ENCODE measurements at regions of chr1 and their contacts with region 1.

Region 1: GRCh38 chr1:30801771-30802198 is 44.2 kb upstream of the LAPTM5 start:
- DNase-seq: peak; percentile 59
- H3K4me3 ChIP-seq: no peak overlapping the region
- H3K27ac ChIP-seq: no peak overlapping the region
- H3K4me1 ChIP-seq: peaks cover 2% of the 10 kb centered on the region
- H3K27me3 ChIP-seq: peaks cover 12 to 18% of the 10 kb centered on the region in 2 experiments
- CTCF ChIP-seq: peak; percentile 88 to 94
- POLR2A ChIP-seq: no peak

Region 2: DNA sequence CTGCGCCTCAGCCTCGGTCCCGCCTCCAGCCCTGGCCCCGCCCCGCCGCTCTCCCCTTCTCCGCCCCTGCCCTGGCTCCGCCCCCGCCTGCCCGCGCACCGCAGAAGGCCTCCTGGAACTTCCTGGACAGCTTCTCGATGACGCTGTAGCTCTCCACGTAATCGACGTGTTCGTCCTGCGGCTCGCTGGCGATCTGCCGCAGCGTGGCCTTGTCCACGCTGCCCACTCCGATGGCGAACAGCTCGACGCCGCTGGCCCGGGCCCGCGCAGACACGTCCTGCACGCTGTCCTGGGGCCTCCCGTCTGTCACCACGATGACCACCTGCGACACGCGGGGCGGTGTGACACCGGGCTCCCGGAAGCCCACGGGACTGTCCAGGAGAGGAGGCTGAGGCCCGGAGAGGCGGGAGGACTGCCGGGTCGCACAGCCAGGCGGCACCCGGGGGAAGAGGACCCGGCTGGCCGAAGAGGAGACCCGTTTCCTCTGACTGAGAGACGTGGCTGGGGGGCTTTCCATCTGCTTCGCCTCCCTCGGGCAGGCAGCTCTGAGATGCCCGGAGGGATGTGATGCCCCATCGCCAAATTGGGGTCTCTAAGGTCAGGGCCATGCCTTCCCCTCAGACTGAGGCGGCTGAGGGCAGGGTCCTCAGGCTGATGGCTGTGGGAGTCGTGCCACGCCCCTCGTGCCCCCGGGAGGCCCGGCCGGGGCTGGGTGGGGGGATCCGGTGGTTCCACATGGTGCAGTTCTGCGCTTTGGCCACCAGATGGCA is 83.0 kb before region 1 on chr1:
- CTCF ChIA-PET with region 1: interaction called, 15 read pairs
- POLR2A ChIA-PET with region 1: interaction called, 3 read pairs
- dilution Hi-C with region 1: no loop called
- intact Hi-C with region 1: no loop called
- DNase-seq: peak; percentile 96
- H3K4me3 ChIP-seq: peak overlapping the region; percentile 10 to 66 (median 27)
- H3K27ac ChIP-seq: peak overlapping the region; percentile 78
- H3K4me1 ChIP-seq: peaks cover 5% of the 10 kb centered on the region
- H3K27me3 ChIP-seq: no peaks in the 10 kb centered on the region
- CTCF ChIP-seq: peak; percentile 92 to 94
- POLR2A ChIP-seq: peak; percentile 72

Region 3: GRCh38 chr1:30816211-30817076 is 14.7 kb after region 1 on chr1:
- CTCF ChIA-PET with region 1: interaction called, 47 read pairs
- POLR2A ChIA-PET with region 1: no interaction called
- dilution Hi-C with region 1: no loop called
- intact Hi-C with region 1: no loop called
- DNase-seq: no peak
- H3K4me3 ChIP-seq: no peak overlapping the region
- H3K27ac ChIP-seq: no peak overlapping the region
- H3K4me1 ChIP-seq: no peaks in the 10 kb centered on the region
- H3K27me3 ChIP-seq: peaks cover 8 to 20% of the 10 kb centered on the region in 2 experiments
- CTCF ChIP-seq: no peak
- POLR2A ChIP-seq: no peak

Region 4: DNA sequence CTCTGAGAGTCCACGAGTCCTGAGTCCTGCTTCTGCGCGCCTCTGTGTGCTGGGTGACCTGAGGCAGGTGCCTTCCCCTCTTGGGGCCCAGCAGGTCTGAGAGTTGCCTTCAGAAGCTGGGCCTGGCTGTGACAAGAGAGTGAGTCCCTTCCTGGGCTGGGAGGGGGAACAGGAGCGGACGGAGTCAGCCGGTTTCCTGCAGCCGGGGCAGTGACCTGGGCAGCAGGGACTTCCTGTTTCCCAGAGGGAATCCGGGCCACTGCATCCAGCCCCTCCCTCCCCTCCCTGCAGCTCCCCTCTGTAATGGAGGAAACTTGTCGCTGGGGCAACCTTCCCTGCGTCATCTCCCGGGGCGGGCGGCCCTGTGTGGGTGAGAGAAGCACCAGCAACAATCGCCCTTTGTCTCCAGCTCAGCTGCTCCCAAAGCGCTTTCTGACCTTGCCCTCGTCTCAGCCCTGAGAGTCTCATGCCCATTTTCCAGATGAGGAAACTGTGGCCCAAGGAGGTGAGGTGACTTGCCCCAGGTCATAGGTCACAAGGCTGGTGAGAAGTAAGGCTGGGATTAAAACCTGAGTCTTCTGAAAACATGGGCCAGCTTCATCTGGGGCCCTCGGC is 45.7 kb after region 1 on chr1:
- CTCF ChIA-PET with region 1: interaction called, 18 read pairs
- POLR2A ChIA-PET with region 1: no interaction called
- dilution Hi-C with region 1: no loop called
- intact Hi-C with region 1: loop called (anchors 2 kb)
- DNase-seq: peak; percentile 81
- H3K4me3 ChIP-seq: no peak overlapping the region
- H3K27ac ChIP-seq: peak overlapping the region; percentile 57
- H3K4me1 ChIP-seq: peaks cover 16% of the 10 kb centered on the region
- H3K27me3 ChIP-seq: peaks cover 27 to 30% of the 10 kb centered on the region in 2 experiments
- CTCF ChIP-seq: no peak
- POLR2A ChIP-seq: no peak

Region 5: DNA sequence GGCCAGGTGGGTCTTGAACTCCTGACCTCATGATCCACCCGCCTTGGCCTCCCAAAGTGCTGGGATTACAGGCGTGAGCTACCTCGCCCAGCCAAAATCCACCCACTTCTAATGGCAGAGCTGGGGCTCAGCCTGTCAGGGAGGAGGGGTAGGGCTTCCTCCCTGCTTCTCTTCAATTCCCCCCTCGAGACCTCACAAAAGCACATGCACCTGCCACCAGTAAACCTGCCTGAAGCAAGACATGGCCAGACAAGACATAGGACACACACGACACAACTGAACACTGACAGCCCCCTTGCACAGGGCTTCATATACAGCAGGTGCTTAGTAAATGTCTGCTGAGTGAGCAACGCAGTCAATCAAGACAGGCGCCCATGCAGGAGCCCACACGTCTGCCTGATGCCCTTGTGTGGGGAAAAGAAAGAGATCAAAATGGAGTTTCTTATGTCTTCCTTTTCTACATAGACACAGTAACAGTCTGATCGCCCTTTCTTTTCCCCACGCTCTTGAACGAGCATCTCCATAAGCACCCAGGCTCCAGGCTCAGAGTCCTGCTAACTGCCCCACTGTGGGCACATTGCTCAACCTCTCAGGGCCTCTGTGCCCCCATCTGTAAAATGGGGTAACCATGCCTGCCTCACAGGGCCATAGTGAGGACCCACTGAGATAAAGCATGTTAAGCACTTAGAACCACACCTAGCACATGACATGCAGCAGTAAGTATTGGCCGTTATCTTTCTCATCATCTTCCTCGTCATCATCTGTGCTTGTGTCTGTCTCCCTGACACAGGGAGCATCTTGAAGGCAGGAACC is 98.0 kb after region 1 on chr1:
- CTCF ChIA-PET with region 1: interaction called, 52 read pairs
- POLR2A ChIA-PET with region 1: no interaction called
- dilution Hi-C with region 1: loop called (anchors 25 kb)
- intact Hi-C with region 1: no loop called
- DNase-seq: no peak
- H3K4me3 ChIP-seq: no peak overlapping the region
- H3K27ac ChIP-seq: no peak overlapping the region
- H3K4me1 ChIP-seq: peaks cover 8% of the 10 kb centered on the region
- H3K27me3 ChIP-seq: no peaks in the 10 kb centered on the region
- CTCF ChIP-seq: no peak
- POLR2A ChIP-seq: no peak

Region 6: GRCh38 chr1:30929135-30929889 is 127.5 kb after region 1 on chr1:
- CTCF ChIA-PET with region 1: interaction called, 73 read pairs
- POLR2A ChIA-PET with region 1: no interaction called
- dilution Hi-C with region 1: loop called (anchors 25 kb)
- intact Hi-C with region 1: loop called (anchors 1 kb)
- DNase-seq: peak; percentile 55
- H3K4me3 ChIP-seq: no peak overlapping the region
- H3K27ac ChIP-seq: no peak overlapping the region
- H3K4me1 ChIP-seq: no peaks in the 10 kb centered on the region
- H3K27me3 ChIP-seq: no peaks in the 10 kb centered on the region
- CTCF ChIP-seq: peak; percentile 64 to 71
- POLR2A ChIP-seq: no peak